Right ventricle myocardium superior (tissue), 1 donor: ENCODE measurements at regions of chr2 and their contacts with region 1.

Region 1: GRCh38 chr2:149017116-149017985 is 21.1 kb upstream of the LYPD6B start:
- DNase-seq: peak; percentile 77
- ATAC-seq: peak; percentile 84

Region 2: DNA sequence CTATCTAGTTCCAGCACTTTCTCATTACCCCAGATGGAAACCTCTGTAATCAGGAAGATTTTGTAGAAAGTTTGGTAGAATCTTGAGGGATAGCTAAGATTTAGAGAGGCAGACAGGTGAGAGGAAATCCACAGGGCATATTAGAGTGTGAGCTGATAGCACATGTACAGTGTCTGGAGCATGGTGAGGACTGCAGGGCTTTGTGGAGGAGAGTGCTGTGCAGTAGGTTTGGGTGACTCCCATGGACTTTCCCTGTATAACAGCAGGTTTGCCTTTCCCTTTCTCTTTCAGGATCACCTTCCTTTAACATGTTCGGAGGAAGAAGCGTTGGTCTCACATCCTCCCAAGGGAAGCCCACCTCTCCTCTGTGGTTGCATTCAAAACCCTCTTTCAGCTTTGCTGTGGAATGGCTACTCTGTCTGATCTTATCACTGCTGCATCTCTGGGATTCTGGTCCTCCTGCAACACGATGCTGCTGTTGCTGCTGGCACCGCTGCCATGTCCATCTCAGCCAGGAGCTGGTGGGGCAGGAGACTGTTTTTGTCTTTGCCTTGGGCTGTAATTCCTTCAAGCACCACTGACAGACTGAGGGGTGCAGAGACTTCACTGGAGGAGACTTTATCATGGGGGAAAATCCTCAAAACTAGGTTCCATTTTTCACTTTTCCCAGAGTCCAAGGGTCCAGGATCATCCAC is 150.1 kb before region 1 on chr2:
- intact Hi-C with region 1: no loop called
- DNase-seq: no peak
- ATAC-seq: no peak

Region 3: DNA sequence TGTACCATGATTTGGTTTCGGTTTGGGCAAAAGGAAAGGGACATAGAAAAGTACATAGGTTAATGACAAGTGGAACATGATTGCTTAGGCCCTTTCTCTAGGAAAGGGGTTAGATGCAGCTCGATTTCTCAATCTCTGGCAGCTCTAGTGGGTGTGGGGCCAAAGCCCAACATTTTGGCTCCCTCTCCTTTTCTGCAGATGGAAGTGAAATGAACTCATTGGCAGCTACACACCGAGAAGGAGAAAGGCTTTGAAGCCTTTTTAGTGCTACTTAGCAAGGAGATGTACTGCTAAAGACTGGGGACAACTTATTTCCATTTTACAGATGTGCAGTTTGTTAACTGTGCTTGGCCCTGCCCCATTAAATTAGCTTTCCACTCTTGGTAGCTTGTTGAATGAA is 115.0 kb after region 1 on chr2:
- intact Hi-C with region 1: no loop called
- DNase-seq: peak; percentile 46
- ATAC-seq: no peak

Region 4: GRCh38 chr2:149313512-149313972 is 296.2 kb after region 1 on chr2:
- intact Hi-C with region 1: loop called (anchors 10 kb)
- DNase-seq: no peak
- ATAC-seq: peak; percentile 57

Region 5: DNA sequence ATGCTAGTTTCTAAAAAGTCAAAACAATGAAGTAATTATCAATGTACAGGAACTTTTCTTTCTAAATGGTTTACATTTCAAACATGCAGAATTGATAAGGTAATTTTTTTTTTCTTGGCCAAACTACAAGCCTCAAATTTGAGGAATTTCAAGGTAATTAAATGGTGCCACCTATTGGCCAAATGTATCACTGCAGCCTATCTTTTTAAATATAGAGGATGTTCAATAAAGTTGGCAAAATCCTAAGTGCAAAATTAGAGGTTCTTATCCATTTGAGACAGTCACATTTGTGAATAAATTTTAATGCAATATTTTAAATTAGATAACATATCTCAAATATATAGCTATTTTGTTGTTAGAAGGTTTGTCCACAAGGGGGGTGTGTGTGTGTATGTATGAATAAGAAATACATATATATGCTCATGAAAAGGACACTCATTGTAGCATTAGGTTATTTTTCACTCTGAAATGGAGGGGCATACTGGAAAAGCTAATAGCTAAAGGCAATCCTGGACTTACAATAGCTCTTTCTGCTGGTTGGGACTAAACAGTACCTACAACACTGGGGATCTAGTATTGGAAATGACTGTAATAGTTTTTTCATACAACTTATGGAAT is 544.1 kb after region 1 on chr2:
- intact Hi-C with region 1: loop called (anchors 2 kb)
- DNase-seq: no peak
- ATAC-seq: peak; percentile 39